Activated CD8-positive, alpha-beta T cell treated with anti-CD3 and anti-CD28 coated beads, Interleukin-2, amount 10 ng/mL, durations not matched to agents 7 days and 5 days (primary cell): ENCODE measurements at regions of chr4 and their contacts with region 1.

Region 1: DNA sequence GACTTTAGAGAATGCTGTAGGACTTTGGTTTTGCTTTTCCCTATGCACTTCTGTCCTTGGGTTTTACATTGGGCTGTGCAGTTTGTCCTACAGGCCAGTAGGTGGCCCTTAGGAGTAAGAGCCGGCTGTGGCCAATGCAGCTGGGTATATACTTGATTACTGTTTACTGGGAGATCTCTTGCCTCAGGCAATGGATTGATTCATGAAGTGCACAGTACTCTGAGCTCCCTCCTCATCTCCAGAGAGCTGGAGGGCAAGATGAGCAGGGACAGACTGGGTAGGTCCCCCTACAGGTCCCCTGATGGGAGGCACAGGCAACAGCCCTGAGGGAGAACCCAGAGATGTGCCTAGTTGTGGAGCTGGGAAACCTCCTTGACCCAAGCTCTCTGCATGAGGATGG is 103.8 kb upstream of the QRFPR start:
- DNase-seq: no peak
- ATAC-seq: peak; percentile 83
- H3K4me3 Mint-ChIP-seq: no peak overlapping the region
- H3K27ac Mint-ChIP-seq: no peak overlapping the region
- H3K4me1 Mint-ChIP-seq: no peaks in the 10 kb centered on the region
- H3K27me3 Mint-ChIP-seq: peaks cover 16% of the 10 kb centered on the region

Region 2: DNA sequence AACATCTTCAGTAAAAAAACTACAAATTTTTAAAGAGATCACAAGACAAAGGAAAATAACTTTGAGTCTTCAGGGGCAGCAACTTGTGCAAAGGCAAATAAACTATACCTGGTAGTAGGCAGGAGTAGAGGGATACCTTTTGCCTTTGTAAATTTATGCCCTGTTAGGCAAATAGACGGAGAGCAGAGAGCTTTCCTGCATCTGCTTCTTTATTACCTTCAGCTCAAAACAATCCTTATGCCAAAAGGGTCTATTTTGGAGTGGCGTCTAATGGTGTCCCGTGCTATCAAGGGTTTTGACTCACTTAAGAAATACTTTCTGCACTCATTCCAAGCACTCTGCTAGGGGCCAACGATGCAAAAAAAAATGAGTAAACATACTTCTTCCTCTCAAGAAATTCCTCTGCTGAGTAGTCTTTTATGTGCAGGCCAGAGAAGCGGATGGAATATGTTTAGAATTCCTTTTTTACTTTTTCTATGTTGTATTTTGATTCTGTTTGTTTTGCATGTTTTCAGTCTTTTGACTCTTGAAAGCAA is 80.3 kb after region 1 on chr4:
- CTCF ChIA-PET with region 1: no interaction called
- POLR2A ChIA-PET with region 1: no interaction called
- DNase-seq: no peak
- ATAC-seq: no peak
- H3K4me3 Mint-ChIP-seq: no peak overlapping the region
- H3K27ac Mint-ChIP-seq: no peak overlapping the region
- H3K4me1 Mint-ChIP-seq: no peaks in the 10 kb centered on the region
- H3K27me3 Mint-ChIP-seq: peaks cover 4% of the 10 kb centered on the region

Region 3: GRCh38 chr4:121736735-121737351 is 252.2 kb after region 1 on chr4:
- CTCF ChIA-PET with region 1: interaction called, 14 read pairs
- POLR2A ChIA-PET with region 1: no interaction called
- DNase-seq: peak; percentile 36
- ATAC-seq: no peak
- H3K4me3 Mint-ChIP-seq: no peak overlapping the region
- H3K27ac Mint-ChIP-seq: no peak overlapping the region
- H3K4me1 Mint-ChIP-seq: no peaks in the 10 kb centered on the region
- H3K27me3 Mint-ChIP-seq: peaks cover 18% of the 10 kb centered on the region